ENCODE measurements at regions of chr20 and their contacts with region 1.

Region 1: DNA sequence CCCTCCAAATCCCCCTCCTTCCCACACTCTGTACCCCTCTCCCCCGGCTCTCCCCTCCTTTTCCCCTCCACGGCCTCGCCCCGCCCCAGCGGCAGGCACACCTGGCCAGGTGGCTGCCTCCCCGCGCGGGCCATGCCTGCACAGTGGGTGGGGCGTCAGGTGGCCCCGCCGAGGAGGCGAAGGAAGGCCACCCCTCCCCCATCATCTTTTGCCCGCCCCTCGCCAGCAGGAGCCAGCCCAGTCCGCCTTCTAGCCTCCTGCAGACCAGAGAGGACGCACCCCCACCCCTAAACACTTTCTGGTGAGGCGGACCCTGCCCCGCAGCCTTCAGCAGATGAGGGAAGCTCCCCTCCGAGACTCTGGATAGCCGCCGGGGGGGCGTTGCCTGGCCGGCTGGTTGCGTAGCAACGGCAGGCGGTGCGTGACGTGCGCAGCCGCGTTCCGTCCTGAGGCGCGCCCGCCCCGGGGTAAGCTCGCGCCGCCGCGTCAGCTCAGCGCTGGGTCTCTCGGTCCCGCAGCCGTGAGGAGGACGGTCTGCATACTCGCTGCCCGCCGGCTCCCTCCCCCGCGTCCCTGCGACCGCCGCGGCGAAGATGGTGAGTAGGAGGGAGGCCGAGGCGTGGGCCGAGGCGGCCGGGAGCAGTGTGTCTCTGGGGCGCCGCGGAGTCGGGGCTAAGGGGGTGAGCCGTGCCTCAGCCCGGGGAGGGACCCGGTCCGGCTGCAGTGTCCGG is at the start of gene DSTN:
- DNase-seq: peak; percentile 91
- H3K4me3 ChIP-seq: peak within 1 kb of the TSS; percentile 85
- H3K27ac ChIP-seq: peak within 1 kb of the TSS; percentile 35
- H3K4me1 ChIP-seq: peaks cover 13% of the 10 kb centered on the region
- CTCF ChIP-seq: no peak
- total RNA-seq, gene DSTN: 25.5 and 28.0 TPM in 2 replicates

Region 2: GRCh38 chr20:16955971-16956370 is 613.8 kb before region 1 on chr20:
- CTCF ChIA-PET with region 1: no interaction called
- POLR2A ChIA-PET with region 1: no interaction called
- intact Hi-C with region 1: no loop called
- DNase-seq: no peak
- H3K4me3 ChIP-seq: no peak overlapping the region
- H3K27ac ChIP-seq: no peak overlapping the region
- H3K4me1 ChIP-seq: no peaks in the 10 kb centered on the region
- CTCF ChIP-seq: no peak

Region 3: DNA sequence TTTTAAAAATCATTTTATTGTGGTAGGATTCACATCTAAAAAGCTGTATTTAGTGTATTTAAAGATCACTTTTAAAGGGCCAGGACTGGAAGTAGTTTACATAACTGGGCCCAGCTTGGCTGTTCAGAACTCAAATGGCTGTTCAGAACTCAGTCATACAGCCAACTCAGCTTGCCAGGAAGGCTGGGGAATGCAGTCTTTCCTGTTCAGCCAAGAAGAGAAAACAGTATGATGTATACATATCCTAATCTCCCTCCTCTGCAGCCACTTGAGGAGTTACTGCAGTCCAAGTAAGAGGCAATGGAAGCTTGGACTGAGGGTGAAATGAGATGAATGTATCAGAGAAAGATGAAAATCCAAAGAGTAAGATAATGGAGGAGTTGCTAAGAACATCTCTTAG is 24.7 kb after region 1 on chr20:
- CTCF ChIA-PET with region 1: no interaction called
- POLR2A ChIA-PET with region 1: interaction called, 15 read pairs
- intact Hi-C with region 1: no loop called
- DNase-seq: no peak
- H3K4me3 ChIP-seq: no peak overlapping the region
- H3K27ac ChIP-seq: no peak overlapping the region
- H3K4me1 ChIP-seq: peaks cover 6% of the 10 kb centered on the region
- CTCF ChIP-seq: no peak

Region 4: GRCh38 chr20:17648791-17649730 is 79.3 kb after region 1 on chr20:
- CTCF ChIA-PET with region 1: no interaction called
- POLR2A ChIA-PET with region 1: interaction called, 4 read pairs
- intact Hi-C with region 1: loop called (anchors 2 kb)
- DNase-seq: peak; percentile 67
- H3K4me3 ChIP-seq: peak overlapping the region; percentile 12
- H3K27ac ChIP-seq: peak overlapping the region; percentile 76
- H3K4me1 ChIP-seq: peaks cover 65% of the 10 kb centered on the region
- CTCF ChIP-seq: peak; percentile 79

Region 5: GRCh38 chr20:17710379-17711266 is 140.8 kb after region 1 on chr20:
- CTCF ChIA-PET with region 1: no interaction called
- POLR2A ChIA-PET with region 1: no interaction called
- intact Hi-C with region 1: no loop called
- DNase-seq: no peak
- H3K4me3 ChIP-seq: no peak overlapping the region
- H3K27ac ChIP-seq: no peak overlapping the region
- H3K4me1 ChIP-seq: no peaks in the 10 kb centered on the region
- CTCF ChIP-seq: no peak